ENCODE measurements at regions of chr5 and their contacts with region 1.

Region 1: GRCh38 chr5:7927466-7928375 is 58.8 kb downstream of the MTRR start:
- DNase-seq: no peak
- H3K4me3 ChIP-seq: no peak overlapping the region
- H3K27ac ChIP-seq: no peak overlapping the region
- H3K4me1 ChIP-seq: no peaks in the 10 kb centered on the region
- H3K27me3 ChIP-seq: no peaks in the 10 kb centered on the region
- CTCF ChIP-seq: peak; percentile 45 to 65 (median 52)
- EP300 ChIP-seq: no peak
- POLR2A ChIP-seq: no peak

Region 2: DNA sequence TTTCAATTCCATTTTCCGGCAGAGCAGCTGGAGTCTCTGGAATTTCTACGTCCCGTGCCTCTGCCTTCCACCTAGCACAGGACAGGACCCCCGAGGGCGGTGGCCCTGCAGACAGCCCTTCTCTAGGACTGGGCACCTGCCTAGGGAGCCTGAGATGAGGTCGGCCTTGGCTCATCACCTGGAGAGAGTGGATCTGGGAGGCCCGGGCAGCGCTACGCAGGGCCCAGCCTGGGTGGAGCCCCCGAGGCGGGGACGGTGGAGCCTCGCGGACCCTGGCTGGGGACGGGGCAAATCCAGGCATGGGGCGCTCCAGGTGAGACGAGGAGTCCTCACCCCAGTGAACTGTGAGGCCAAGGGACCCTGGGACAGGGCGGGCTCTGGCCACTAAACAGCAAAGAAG is 55.7 kb after region 1 on chr5:
- intact Hi-C with region 1: no loop called
- DNase-seq: no peak
- H3K4me3 ChIP-seq: no peak overlapping the region
- H3K27ac ChIP-seq: no peak overlapping the region
- H3K4me1 ChIP-seq: no peaks in the 10 kb centered on the region
- H3K27me3 ChIP-seq: no peaks in the 10 kb centered on the region
- CTCF ChIP-seq: no peak
- EP300 ChIP-seq: no peak
- POLR2A ChIP-seq: no peak

Region 3: DNA sequence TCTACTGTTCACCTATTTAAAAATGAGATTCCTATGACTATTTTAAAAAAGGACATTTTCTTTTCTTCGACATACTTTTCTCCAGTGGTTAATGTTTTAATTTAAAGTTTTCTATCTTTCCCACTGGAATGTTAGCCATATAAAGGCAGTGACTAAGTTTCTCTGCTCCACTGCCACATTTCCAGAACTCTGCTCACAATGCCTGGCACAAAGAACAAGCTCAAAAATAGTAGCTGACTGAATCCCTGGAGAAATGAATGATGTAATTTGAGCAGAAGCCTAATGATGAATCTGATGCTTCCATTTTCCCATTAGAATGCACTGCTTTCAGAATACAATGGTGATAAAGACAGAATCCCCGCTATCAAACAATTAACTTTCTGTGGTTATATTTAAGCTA is 759.0 kb after region 1 on chr5:
- intact Hi-C with region 1: loop called (anchors 10 kb)
- DNase-seq: no peak
- H3K4me3 ChIP-seq: no peak overlapping the region
- H3K27ac ChIP-seq: peak overlapping the region in 1 of 4 donors; percentile 18
- H3K4me1 ChIP-seq: peaks cover 0 to 3% (median 0%) of the 10 kb centered on the region in 4 donors
- H3K27me3 ChIP-seq: no peaks in the 10 kb centered on the region
- CTCF ChIP-seq: no peak
- EP300 ChIP-seq: no peak
- POLR2A ChIP-seq: no peak

Region 4: DNA sequence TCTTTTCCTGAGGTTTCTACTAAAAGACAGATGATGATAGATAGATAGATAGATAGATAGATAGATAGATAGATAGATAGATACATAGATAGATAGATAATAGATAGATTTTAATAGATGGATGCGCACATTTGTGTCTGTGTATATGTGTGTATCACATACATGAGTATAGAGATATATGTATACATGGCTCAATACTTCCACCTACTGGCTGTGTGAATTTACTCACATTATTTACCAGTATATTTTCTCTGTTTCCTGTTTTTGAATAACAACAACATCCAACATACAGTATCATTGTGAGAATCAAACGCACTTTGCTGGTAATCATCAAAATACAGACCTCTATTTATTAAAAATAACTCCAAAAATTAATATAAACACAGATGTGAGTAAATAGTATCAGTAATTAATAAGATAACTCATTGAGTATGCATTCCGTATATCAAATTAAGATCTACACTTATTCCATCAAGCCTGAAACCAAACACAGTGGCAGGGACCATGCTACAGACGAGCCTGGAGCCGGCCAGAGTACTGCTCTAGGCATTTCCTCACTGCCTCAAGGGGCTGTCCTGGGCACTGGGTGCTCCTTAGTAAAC is 1280.2 kb after region 1 on chr5:
- intact Hi-C with region 1: loop called (anchors 10 kb)
- DNase-seq: no peak
- H3K4me3 ChIP-seq: no peak overlapping the region
- H3K27ac ChIP-seq: no peak overlapping the region
- H3K4me1 ChIP-seq: no peaks in the 10 kb centered on the region
- H3K27me3 ChIP-seq: no peaks in the 10 kb centered on the region
- CTCF ChIP-seq: peak in 2 of 4 experiments; percentile 23 to 48
- EP300 ChIP-seq: no peak
- POLR2A ChIP-seq: no peak